ENCODE measurements at regions of chrX and their contacts with region 1.

Region 1: GRCh38 chrX:39381422-39381821 is 580.2 kb downstream of the MID1IP1 start:
- DNase-seq: no peak

Region 2: DNA sequence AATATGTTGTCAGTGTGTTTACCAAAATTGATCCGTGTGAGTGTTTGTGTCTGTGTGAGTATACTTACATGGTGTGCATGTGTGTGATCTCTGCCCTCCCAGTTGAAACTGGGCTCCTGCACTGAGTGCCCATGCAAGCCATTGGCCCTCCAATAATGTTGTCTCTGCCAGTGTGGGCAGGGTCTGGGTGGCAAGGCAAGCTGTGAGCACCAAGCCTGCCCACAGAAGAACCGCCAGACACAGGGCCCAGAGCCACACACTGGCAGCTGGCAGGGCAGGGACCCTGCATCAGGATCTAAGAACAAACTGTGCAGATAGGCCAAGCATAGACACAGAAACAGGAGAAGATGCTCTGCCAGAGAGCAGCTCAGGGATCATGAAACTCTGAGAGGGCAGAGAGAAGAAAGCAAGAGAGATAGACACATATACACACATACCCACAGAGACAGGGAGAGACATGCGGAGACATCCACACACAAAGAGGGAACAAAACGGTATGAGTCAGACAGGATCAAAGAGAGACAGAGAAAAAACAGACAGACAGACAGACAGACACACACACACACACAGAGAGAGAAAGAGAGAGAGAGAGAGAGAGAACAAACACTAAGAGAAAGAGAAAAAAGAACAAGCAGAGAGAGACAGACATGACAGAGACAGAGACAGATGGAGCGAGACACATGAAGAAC is 25.2 kb before region 1 on chrX:
- intact Hi-C with region 1: no loop called
- DNase-seq: peak in 2 of 10 donors; percentile 58 to 66

Region 3: DNA sequence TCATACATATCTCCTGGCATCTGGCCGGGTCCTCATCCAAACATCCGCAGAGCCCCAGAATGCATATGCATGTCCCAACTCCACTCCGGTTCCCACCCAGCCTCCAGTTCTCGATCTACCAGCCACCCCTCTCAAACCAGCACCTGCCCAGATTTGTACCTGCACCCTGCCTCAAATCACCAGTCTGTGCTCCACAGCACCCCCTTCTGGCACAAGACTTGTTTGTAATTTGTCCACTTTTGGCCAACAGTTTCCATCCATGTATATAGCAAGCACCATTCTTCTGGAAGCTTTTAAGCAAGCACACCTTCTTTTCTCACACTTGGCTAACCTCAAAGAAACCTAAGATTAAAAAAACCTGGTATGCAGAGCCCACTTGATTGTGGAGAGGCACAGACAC is 63.9 kb after region 1 on chrX:
- intact Hi-C with region 1: loop called (anchors 10 kb)
- DNase-seq: peak in 1 of 10 donors; percentile 8

Region 4: GRCh38 chrX:39984191-39984956 is 603.0 kb after region 1 on chrX:
- intact Hi-C with region 1: no loop called
- DNase-seq: peak in 2 of 10 donors; percentile 3 to 74